ENCODE measurements at regions of chr10 and their contacts with region 1.

Region 1: GRCh38 chr10:116796910-116797513 is 52.3 kb upstream of the ENO4 start:
- DNase-seq: peak; percentile 74 to 85 (median 83)
- ATAC-seq: peak; percentile 76 to 85
- H3K4me3 ChIP-seq: no peak overlapping the region
- H3K27ac ChIP-seq: no peak overlapping the region
- H3K4me1 ChIP-seq: no peaks in the 10 kb centered on the region
- H3K27me3 ChIP-seq: peaks cover 2% of the 10 kb centered on the region

Region 2: DNA sequence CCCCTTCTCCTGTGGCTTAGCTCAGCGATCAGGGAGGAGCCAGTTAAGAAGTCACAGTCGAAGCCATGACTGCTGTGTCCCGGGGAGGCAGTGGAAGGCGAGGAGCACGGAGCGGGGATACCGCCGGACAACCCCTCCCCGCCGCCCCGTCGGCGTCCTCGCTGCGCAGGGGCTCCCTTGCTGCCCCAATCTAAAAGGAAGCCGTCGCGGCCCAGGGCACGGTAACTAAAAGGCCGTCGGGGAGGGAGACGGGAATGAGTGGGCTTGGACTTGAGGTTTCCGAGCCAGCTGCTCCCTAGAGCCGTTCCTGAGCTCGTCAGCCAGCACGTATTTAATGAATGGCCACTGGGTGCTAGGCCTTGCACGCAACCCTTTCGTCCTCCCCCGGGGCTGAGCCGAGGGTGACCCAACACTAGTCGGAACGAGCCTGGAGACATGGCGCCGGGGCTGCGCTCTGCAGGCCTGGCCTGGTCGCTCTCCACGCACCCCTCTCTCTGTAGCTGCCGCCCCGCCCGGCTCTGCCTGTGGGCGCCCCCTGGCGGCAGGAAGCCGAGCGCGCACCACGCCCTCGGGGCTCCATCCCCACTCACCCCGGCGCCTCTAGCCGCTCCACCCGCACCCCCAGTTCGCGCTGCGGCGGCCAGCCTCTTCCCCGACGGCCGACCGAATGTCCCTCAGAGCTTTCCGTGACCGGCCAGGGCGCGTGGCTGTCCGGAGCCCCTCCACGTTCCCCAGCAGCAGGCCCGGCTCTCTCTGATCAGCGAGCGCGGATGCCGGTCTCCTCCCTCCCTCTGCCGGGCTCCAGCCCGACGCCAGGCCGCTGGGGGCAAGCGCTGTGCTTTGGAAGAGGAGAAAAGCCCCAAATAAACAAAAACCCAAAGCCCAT is 371.0 kb after region 1 on chr10:
- intact Hi-C with region 1: loop called in 2 of 4 experiments (anchors 5 kb)
- DNase-seq: peak; percentile 55 to 81 (median 81)
- ATAC-seq: peak; percentile 90 to 92
- H3K4me3 ChIP-seq: peak overlapping the region; percentile 0
- H3K27ac ChIP-seq: no peak overlapping the region
- H3K4me1 ChIP-seq: no peaks in the 10 kb centered on the region
- H3K27me3 ChIP-seq: no peaks in the 10 kb centered on the region

Region 3: DNA sequence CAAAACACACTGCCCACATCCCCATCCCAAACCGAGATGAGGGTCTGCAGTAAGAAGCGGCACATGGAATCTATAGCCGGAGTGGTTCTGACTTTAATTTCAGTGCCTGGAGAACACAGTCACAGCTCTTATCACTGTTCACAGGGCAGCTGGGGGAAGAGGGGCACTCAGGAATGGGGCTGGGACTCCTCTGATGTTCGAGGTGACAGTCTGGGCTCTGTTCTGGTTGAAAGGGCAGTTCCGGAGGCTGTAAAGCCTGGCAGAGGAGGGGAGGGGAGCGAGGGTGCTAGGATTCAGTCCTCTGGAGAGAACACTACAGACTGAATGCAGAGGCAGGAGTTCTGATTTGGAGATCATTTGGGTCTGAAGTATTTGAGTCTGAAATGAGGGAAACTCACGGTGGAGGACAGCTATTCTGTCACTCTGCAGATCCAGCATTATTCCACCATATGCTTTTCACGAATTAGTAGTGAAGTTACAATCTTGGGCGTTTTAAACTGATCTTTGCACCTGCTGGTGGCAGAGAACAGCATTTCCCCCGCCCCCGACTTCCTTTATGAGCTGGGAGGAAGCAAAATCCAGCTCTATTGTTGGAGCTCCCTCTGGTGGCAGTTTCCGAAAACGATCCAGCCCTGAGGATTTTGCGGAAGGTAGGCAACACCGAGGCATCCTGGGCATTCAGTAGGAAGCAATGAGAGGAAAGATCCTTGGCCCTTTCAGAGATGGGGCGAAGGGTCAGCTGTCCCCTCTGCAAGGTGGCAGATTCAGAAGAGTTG is 377.6 kb after region 1 on chr10:
- intact Hi-C with region 1: loop called (anchors 2 to 5 kb)
- DNase-seq: peak; percentile 65 to 88 (median 82)
- ATAC-seq: peak; percentile 86 to 91
- H3K4me3 ChIP-seq: peak overlapping the region; percentile 23
- H3K27ac ChIP-seq: no peak overlapping the region
- H3K4me1 ChIP-seq: peaks cover 3% of the 10 kb centered on the region
- H3K27me3 ChIP-seq: no peaks in the 10 kb centered on the region